Endothelial cell of umbilical vein (primary cell): ENCODE measurements at regions of chr9 and their contacts with region 1.

Region 1: DNA sequence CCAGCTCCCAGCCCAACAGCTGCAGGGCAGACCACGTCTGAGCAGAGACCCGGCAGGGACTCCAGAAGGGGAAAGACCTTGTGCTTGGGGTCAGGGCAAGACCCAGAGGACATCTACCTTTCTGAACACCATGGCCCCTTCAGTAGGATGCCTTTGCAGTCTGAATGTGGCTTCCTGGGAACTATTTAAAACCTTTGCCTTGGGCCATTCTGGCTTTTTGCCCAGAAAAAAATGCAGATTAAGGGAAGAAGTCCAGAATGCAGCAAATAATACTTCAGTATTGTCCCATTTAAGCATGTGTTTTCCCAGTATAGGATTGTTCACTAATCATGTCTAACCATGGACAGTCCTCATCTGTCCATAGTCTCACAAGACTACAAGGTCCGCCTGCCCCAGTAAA is 67.5 kb upstream of the ERCC6L2 start:
- DNase-seq: peak; percentile 49
- H3K4me3 ChIP-seq: no peak overlapping the region
- H3K27ac ChIP-seq: no peak overlapping the region
- H3K4me1 ChIP-seq: peaks cover 5% of the 10 kb centered on the region
- H3K27me3 ChIP-seq: no peaks in the 10 kb centered on the region
- CTCF ChIP-seq: no peak
- POLR2A ChIP-seq: no peak

Region 2: DNA sequence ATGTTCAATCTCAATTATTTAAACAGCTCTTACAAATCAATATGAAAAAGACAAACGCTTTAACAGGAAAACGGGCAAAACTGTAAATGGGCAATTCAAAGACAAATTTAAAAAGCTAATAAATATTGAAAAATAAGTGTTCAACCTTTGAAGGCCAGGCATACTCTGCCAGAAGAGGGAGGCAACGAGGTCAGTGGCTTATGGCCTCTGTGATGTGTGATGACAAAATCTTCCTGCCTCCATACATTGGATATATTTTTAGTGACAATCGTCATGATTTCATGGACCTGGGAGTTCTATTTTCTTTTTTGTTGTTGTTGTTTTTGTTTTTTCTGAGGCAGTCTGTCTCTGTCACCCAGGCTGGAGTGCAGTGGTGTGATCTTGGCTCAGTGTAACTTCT is 63.7 kb before region 1 on chr9:
- CTCF ChIA-PET with region 1: no interaction called
- POLR2A ChIA-PET with region 1: no interaction called
- dilution Hi-C with region 1: no loop called
- intact Hi-C with region 1: loop called (anchors 5 kb)
- DNase-seq: no peak
- H3K4me3 ChIP-seq: no peak overlapping the region
- H3K27ac ChIP-seq: no peak overlapping the region
- H3K4me1 ChIP-seq: no peaks in the 10 kb centered on the region
- H3K27me3 ChIP-seq: no peaks in the 10 kb centered on the region
- CTCF ChIP-seq: no peak
- POLR2A ChIP-seq: no peak